CD8-positive, alpha-beta T cell (primary cell): ENCODE measurements at regions of chr16 and their contacts with region 1.

Region 1: GRCh38 chr16:48623304-48624016 is 13.5 kb upstream of the N4BP1 start:
- DNase-seq: peak; percentile 71 to 91 (median 78)
- ATAC-seq: peak; percentile 96
- H3K4me3 ChIP-seq: peak overlapping the region; percentile 53 to 55
- H3K4me3 Mint-ChIP-seq: peak overlapping the region; percentile 84
- H3K27ac ChIP-seq: no peak overlapping the region
- H3K27ac Mint-ChIP-seq: peak overlapping the region; percentile 76
- H3K4me1 ChIP-seq: peaks cover 23% of the 10 kb centered on the region
- H3K4me1 Mint-ChIP-seq: peaks cover 32% of the 10 kb centered on the region
- H3K27me3 ChIP-seq: no peaks in the 10 kb centered on the region
- H3K27me3 Mint-ChIP-seq: no peaks in the 10 kb centered on the region
- CTCF ChIP-seq: peak; percentile 99

Region 2: GRCh38 chr16:47533744-47534292 is 1089.6 kb before region 1 on chr16:
- CTCF ChIA-PET with region 1: no interaction called
- POLR2A ChIA-PET with region 1: no interaction called
- intact Hi-C with region 1: no loop called
- DNase-seq: no peak
- ATAC-seq: no peak
- H3K4me3 ChIP-seq: no peak overlapping the region
- H3K4me3 Mint-ChIP-seq: no peak overlapping the region
- H3K27ac ChIP-seq: no peak overlapping the region
- H3K27ac Mint-ChIP-seq: no peak overlapping the region
- H3K4me1 ChIP-seq: no peaks in the 10 kb centered on the region
- H3K4me1 Mint-ChIP-seq: peaks cover 3% of the 10 kb centered on the region
- H3K27me3 ChIP-seq: no peaks in the 10 kb centered on the region
- H3K27me3 Mint-ChIP-seq: no peaks in the 10 kb centered on the region
- CTCF ChIP-seq: no peak

Region 3: DNA sequence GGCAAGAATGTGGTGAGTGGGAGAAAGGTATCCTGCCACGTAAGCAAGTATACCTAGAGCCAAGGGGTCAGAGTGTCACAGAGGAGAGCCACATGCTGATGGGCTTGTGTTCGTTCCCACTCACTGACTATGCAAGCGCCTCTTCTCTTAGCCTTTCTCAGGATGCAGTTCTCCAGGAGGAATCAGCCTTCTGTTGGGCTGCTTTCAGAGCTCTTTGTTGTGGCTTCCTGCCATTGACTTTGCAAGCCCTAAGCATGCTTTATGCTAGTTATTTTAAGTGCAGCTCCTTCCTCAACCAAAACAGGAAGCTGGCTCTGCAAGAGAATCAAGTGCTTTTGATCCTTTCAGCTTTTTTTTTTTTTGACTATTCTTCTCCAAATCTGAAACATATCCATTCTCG is 304.8 kb before region 1 on chr16:
- CTCF ChIA-PET with region 1: interaction called, 13 read pairs
- POLR2A ChIA-PET with region 1: interaction called, 5 read pairs
- intact Hi-C with region 1: no loop called
- DNase-seq: peak in 8 of 9 experiments; percentile 7 to 73 (median 36)
- ATAC-seq: peak; percentile 87
- H3K4me3 ChIP-seq: no peak overlapping the region
- H3K4me3 Mint-ChIP-seq: peak overlapping the region; percentile 62
- H3K27ac ChIP-seq: peak overlapping the region in 1 of 2 experiments; percentile 51
- H3K27ac Mint-ChIP-seq: peak overlapping the region; percentile 79
- H3K4me1 ChIP-seq: peaks cover 32% of the 10 kb centered on the region
- H3K4me1 Mint-ChIP-seq: peaks cover 54% of the 10 kb centered on the region
- H3K27me3 ChIP-seq: no peaks in the 10 kb centered on the region
- H3K27me3 Mint-ChIP-seq: no peaks in the 10 kb centered on the region
- CTCF ChIP-seq: no peak

Region 4: GRCh38 chr16:48365581-48366164 is 257.8 kb before region 1 on chr16:
- CTCF ChIA-PET with region 1: interaction called, 32 read pairs
- POLR2A ChIA-PET with region 1: interaction called, 4 read pairs
- intact Hi-C with region 1: no loop called
- DNase-seq: peak; percentile 48 to 83 (median 69)
- ATAC-seq: peak; percentile 85
- H3K4me3 ChIP-seq: peak overlapping the region; percentile 65 to 83
- H3K4me3 Mint-ChIP-seq: peak overlapping the region; percentile 89
- H3K27ac ChIP-seq: peak overlapping the region; percentile 63 to 89
- H3K27ac Mint-ChIP-seq: peak overlapping the region; percentile 97
- H3K4me1 ChIP-seq: peaks cover 25% of the 10 kb centered on the region
- H3K4me1 Mint-ChIP-seq: peaks cover 40% of the 10 kb centered on the region
- H3K27me3 ChIP-seq: no peaks in the 10 kb centered on the region
- H3K27me3 Mint-ChIP-seq: no peaks in the 10 kb centered on the region
- CTCF ChIP-seq: no peak

Region 5: DNA sequence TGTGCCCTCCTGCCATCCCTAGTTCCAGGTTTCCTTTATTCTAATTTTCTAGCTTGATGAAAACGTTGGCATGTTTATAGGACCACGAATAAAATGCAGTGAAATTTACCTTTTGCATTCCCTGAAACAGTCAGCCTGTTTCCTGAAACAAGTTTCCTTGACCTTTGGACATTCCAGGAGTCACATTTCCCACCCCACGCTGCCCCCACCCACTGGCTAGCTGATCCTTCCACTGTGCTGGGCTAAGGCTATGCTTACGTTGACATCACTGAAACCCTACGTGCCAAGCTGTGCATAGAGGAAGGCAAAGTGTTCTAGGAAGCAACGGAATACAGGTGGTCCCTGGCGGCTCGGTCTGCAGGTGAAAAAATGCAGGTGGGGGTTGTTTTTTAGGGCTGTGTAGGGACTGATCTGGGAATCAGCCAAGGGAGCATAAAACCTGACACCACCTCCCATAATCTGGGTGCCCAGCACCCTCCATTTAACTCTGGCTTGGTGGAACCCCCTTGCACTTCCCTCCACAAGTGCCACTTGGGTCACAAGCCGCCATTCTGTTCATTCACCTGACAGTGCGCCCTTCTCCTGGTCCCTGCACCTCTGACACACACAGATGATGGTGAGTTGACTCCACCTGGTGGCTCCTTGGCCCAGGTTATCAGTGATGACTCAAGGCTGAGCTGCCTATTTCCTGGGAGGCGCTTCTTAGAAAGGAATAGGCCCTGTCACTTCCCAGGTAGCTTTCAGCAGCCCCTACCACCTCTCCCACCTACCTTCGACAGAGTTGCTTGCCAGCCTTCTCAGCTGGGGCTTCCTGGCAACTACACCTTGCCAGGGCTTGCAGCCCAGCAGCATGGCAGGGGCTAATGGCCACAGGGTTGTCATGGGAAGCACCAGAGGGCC is 97.2 kb before region 1 on chr16:
- CTCF ChIA-PET with region 1: interaction called, 10 read pairs
- POLR2A ChIA-PET with region 1: no interaction called
- intact Hi-C with region 1: no loop called
- DNase-seq: peak in 3 of 9 experiments; percentile 36 to 50 (median 36)
- ATAC-seq: peak; percentile 34
- H3K4me3 ChIP-seq: no peak overlapping the region
- H3K4me3 Mint-ChIP-seq: no peak overlapping the region
- H3K27ac ChIP-seq: no peak overlapping the region
- H3K27ac Mint-ChIP-seq: no peak overlapping the region
- H3K4me1 ChIP-seq: no peaks in the 10 kb centered on the region
- H3K4me1 Mint-ChIP-seq: no peaks in the 10 kb centered on the region
- H3K27me3 ChIP-seq: no peaks in the 10 kb centered on the region
- H3K27me3 Mint-ChIP-seq: no peaks in the 10 kb centered on the region
- CTCF ChIP-seq: no peak

Region 6: DNA sequence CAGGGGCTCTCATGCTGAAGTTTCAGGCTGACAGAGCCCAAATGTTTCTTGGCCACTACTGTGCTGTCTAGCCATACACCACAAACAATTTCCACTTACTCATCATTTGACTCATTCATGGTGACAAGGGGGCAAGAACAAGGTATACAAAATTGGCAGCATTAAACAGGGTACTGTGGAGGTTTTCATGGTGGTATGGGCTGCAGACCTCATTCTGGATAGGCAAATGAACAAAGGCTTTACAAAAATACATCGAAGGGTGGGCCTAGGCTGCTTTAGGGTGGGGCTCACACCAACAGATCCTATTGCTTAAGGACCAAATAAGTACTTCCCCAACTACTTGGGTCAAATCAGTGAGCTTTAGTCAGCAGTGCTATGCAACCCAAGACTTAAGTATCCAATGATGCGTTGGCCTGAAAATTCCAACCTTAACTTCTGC is 66.5 kb before region 1 on chr16:
- CTCF ChIA-PET with region 1: interaction called, 24 read pairs
- POLR2A ChIA-PET with region 1: interaction called, 3 read pairs
- intact Hi-C with region 1: loop called (anchors 1 to 2 kb)
- DNase-seq: peak in 2 of 9 experiments; percentile 27 to 30
- ATAC-seq: peak; percentile 45
- H3K4me3 ChIP-seq: no peak overlapping the region
- H3K4me3 Mint-ChIP-seq: no peak overlapping the region
- H3K27ac ChIP-seq: no peak overlapping the region
- H3K27ac Mint-ChIP-seq: peak overlapping the region; percentile 38
- H3K4me1 ChIP-seq: peaks cover 47% of the 10 kb centered on the region
- H3K4me1 Mint-ChIP-seq: peaks cover 80% of the 10 kb centered on the region
- H3K27me3 ChIP-seq: no peaks in the 10 kb centered on the region
- H3K27me3 Mint-ChIP-seq: no peaks in the 10 kb centered on the region
- CTCF ChIP-seq: no peak

Region 7: DNA sequence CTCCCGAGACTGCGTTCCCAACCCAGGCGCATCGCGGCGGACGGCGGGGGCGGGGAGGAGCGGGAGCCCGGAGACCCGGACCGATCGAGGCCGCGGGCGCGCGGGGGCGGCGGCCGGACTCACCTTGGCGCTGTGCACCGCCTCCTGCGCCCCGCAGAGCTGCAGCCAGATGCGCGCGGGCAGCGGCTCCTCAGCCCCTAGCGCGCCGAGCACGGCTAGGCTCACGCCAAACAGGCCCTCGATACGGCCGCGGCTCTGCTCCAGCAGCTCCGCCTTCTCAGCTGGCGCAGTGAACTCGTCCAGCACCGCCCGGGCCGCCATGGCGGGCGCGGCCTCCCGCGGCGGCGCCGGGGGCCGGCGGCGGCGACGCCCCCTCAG is 13.8 kb before region 1 on chr16:
- CTCF ChIA-PET with region 1: interaction called, 110 read pairs
- POLR2A ChIA-PET with region 1: interaction called, 51 read pairs
- intact Hi-C with region 1: loop called (anchors 1 kb)
- DNase-seq: no peak
- ATAC-seq: peak; percentile 17
- H3K4me3 ChIP-seq: peak overlapping the region; percentile 81 to 88
- H3K4me3 Mint-ChIP-seq: peak overlapping the region; percentile 86
- H3K27ac ChIP-seq: peak overlapping the region; percentile 72 to 87
- H3K27ac Mint-ChIP-seq: peak overlapping the region; percentile 94
- H3K4me1 ChIP-seq: peaks cover 79% of the 10 kb centered on the region
- H3K4me1 Mint-ChIP-seq: peaks cover 40% of the 10 kb centered on the region
- H3K27me3 ChIP-seq: no peaks in the 10 kb centered on the region
- H3K27me3 Mint-ChIP-seq: no peaks in the 10 kb centered on the region
- CTCF ChIP-seq: no peak

Region 8: GRCh38 chr16:48676836-48677235 is 53.4 kb after region 1 on chr16:
- CTCF ChIA-PET with region 1: no interaction called
- POLR2A ChIA-PET with region 1: no interaction called
- intact Hi-C with region 1: no loop called
- DNase-seq: no peak
- ATAC-seq: no peak
- H3K4me3 ChIP-seq: no peak overlapping the region
- H3K4me3 Mint-ChIP-seq: no peak overlapping the region
- H3K27ac ChIP-seq: no peak overlapping the region
- H3K27ac Mint-ChIP-seq: no peak overlapping the region
- H3K4me1 ChIP-seq: no peaks in the 10 kb centered on the region
- H3K4me1 Mint-ChIP-seq: no peaks in the 10 kb centered on the region
- H3K27me3 ChIP-seq: peaks cover 0 to 2% of the 10 kb centered on the region in 2 experiments
- H3K27me3 Mint-ChIP-seq: peaks cover 6% of the 10 kb centered on the region
- CTCF ChIP-seq: no peak